ENCODE measurements at regions of chr11 and their contacts with region 1.

Region 1: DNA sequence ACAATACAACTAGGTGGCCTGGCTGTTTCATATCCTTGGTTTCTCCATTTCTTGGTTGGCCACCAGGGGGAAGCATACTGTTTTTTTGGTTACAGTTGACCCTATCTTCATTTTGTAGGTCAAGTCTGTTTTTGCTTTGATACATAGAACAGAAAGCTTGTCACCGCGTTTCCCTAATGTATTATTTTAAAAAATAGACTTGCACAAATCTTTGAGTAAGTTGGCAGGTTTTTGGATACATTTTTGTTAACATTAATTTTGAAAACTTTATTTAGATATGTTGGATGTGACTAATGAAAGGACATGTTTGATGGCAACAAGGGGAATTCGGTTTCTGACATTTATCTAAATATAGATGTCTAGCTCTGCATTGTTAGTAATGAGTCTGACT is 3.0 kb downstream of the NCR3LG1 start:
- DNase-seq: peak; percentile 13 to 82 (median 62)
- ATAC-seq: no peak
- H3K4me3 ChIP-seq: no peak overlapping the region
- H3K4me3 Mint-ChIP-seq: peak overlapping the region; percentile 91
- H3K27ac ChIP-seq: no peak overlapping the region
- H3K27ac Mint-ChIP-seq: no peak overlapping the region
- H3K4me1 ChIP-seq: peaks cover 20% of the 10 kb centered on the region
- H3K4me1 Mint-ChIP-seq: peaks cover 30% of the 10 kb centered on the region
- H3K27me3 ChIP-seq: no peaks in the 10 kb centered on the region
- H3K27me3 Mint-ChIP-seq: no peaks in the 10 kb centered on the region
- CTCF ChIP-seq: peak; percentile 68

Region 2: GRCh38 chr11:16738193-16738946 is 616.2 kb before region 1 on chr11 and contains the start of gene C11orf58:
- CTCF ChIA-PET with region 1: no interaction called
- POLR2A ChIA-PET with region 1: no interaction called
- intact Hi-C with region 1: loop called in 1 of 2 experiments (anchors 10 kb)
- DNase-seq: peak; percentile 85 to 98 (median 96)
- ATAC-seq: peak; percentile 95
- H3K4me3 ChIP-seq: peak within 1 kb of the TSS; percentile 93 to 95
- H3K4me3 Mint-ChIP-seq: peak within 1 kb of the TSS; percentile 63
- H3K27ac ChIP-seq: peak within 1 kb of the TSS; percentile 99 to 100
- H3K27ac Mint-ChIP-seq: no peak within 1 kb of the TSS
- H3K4me1 ChIP-seq: peaks cover 35% of the 10 kb centered on the region
- H3K4me1 Mint-ChIP-seq: peaks cover 25% of the 10 kb centered on the region
- H3K27me3 ChIP-seq: no peaks in the 10 kb centered on the region
- H3K27me3 Mint-ChIP-seq: no peaks in the 10 kb centered on the region
- CTCF ChIP-seq: no peak
- total RNA-seq, gene C11orf58: 148 to 157 TPM

Region 3: GRCh38 chr11:16935518-16936302 is 418.9 kb before region 1 on chr11:
- CTCF ChIA-PET with region 1: no interaction called
- POLR2A ChIA-PET with region 1: no interaction called
- intact Hi-C with region 1: no loop called
- DNase-seq: peak in 2 of 9 experiments; percentile 42 to 49
- ATAC-seq: no peak
- H3K4me3 ChIP-seq: no peak overlapping the region
- H3K4me3 Mint-ChIP-seq: no peak overlapping the region
- H3K27ac ChIP-seq: no peak overlapping the region
- H3K27ac Mint-ChIP-seq: no peak overlapping the region
- H3K4me1 ChIP-seq: no peaks in the 10 kb centered on the region
- H3K4me1 Mint-ChIP-seq: no peaks in the 10 kb centered on the region
- H3K27me3 ChIP-seq: no peaks in the 10 kb centered on the region
- H3K27me3 Mint-ChIP-seq: peaks cover 6% of the 10 kb centered on the region
- CTCF ChIP-seq: no peak

Region 4: DNA sequence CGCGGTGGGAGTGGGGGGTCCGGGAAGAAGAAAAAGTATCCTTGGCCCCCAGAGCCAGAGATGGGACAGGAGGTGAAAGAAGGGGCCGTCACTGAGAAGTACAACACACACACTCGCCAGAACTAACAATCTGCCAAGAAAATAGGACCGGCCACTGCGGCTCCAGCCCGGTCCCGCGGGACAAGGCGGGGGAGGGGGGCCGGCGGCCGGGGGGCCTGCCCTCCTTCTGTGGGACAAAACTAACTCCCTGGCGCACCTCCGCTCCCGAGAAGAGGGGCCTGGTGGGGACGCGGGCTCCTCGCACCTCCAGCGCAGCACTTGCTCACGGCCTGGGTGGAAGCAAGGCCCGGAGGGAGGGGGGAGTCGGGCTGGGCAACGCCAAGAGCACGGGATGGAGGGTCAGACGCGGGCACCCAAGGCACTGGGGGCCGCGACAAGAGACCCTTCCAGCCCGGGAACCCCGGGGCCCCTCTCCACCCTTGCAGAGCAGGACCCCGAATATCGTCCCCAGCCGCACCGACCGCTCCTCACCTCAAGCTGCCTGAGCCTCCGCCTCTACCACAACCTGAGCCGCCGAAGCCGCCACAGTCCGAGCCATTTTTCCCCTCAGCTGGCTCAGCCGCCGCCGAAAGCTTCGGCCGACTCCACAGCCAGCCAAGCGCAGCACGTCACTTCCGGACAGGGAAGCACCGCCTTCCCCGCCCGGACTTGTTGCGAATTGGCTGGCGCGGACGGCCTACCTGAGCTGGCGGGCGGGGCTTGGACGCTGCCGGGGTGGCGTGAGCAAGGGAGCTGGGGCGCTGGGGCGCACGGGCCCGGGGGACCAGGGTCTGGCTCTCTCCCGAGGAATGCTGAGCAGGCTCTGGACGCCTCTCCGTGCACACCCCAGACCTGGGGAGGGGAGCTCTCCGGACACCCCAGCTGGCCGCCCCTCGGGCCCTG is 147.0 kb before region 1 on chr11 and contains the start of gene PIK3C2A:
- CTCF ChIA-PET with region 1: no interaction called
- POLR2A ChIA-PET with region 1: interaction called, 3 read pairs
- intact Hi-C with region 1: loop called (anchors 1 to 5 kb)
- DNase-seq: peak; percentile 87 to 96 (median 94)
- ATAC-seq: peak; percentile 96
- H3K4me3 ChIP-seq: peak within 1 kb of the TSS; percentile 80 to 86
- H3K4me3 Mint-ChIP-seq: peak within 1 kb of the TSS; percentile 99
- H3K27ac ChIP-seq: peak within 1 kb of the TSS; percentile 76 to 88
- H3K27ac Mint-ChIP-seq: peak within 1 kb of the TSS; percentile 99
- H3K4me1 ChIP-seq: peaks cover 26% of the 10 kb centered on the region
- H3K4me1 Mint-ChIP-seq: peaks cover 47% of the 10 kb centered on the region
- H3K27me3 ChIP-seq: no peaks in the 10 kb centered on the region
- H3K27me3 Mint-ChIP-seq: no peaks in the 10 kb centered on the region
- CTCF ChIP-seq: no peak
- total RNA-seq, gene PIK3C2A: 50.8 to 54.3 TPM

Region 5: DNA sequence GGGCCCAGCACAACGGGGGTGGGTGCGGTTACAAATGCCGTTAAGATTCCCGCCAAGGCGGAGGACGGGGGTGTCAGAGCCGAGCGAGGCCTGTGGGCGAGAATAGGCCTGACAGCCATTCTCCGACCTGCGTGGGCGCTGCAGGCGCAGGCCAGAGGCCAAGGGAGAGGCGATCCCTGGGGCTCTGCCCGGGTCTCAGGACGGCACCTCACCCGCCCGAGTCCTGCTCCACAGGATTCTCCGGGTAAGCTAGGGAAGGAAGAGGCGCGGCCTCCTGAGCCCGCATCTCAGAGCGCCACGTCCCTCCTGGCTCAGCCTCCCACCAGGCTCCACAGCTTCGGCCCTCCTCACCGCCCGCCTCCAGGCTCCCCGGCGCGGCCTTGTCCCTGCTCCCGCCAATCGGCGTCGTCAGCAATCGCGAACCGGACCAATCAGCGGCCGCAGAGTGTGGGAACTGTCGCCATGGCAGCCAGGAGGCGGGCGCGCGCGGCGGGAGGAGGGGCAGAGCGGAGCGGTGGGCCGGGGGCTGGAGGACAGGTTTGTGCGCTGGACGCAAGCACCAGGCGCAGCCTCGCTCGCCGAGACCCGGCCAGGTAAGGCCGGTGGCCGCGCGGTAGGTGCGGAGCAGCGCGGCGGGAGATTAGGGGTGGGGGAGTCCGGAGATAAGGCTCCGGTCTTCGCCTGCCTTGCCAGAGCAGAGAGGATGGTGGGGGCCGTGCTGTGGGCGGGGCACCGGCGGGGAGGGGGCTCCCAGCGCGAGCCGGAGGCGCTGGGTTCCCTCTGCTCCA is 78.2 kb before region 1 on chr11 and contains the start of gene NUCB2:
- CTCF ChIA-PET with region 1: interaction called, 8 read pairs
- POLR2A ChIA-PET with region 1: interaction called, 19 read pairs
- intact Hi-C with region 1: loop called (anchors 2 kb)
- DNase-seq: peak; percentile 89 to 98 (median 96)
- ATAC-seq: peak; percentile 90
- H3K4me3 ChIP-seq: peak within 1 kb of the TSS; percentile 77 to 83
- H3K4me3 Mint-ChIP-seq: peak within 1 kb of the TSS; percentile 84
- H3K27ac ChIP-seq: peak within 1 kb of the TSS; percentile 79 to 86
- H3K27ac Mint-ChIP-seq: peak within 1 kb of the TSS; percentile 91
- H3K4me1 ChIP-seq: peaks cover 37% of the 10 kb centered on the region
- H3K4me1 Mint-ChIP-seq: peaks cover 39% of the 10 kb centered on the region
- H3K27me3 ChIP-seq: no peaks in the 10 kb centered on the region
- H3K27me3 Mint-ChIP-seq: no peaks in the 10 kb centered on the region
- CTCF ChIP-seq: no peak
- total RNA-seq, gene NUCB2: 105 TPM

Region 6: DNA sequence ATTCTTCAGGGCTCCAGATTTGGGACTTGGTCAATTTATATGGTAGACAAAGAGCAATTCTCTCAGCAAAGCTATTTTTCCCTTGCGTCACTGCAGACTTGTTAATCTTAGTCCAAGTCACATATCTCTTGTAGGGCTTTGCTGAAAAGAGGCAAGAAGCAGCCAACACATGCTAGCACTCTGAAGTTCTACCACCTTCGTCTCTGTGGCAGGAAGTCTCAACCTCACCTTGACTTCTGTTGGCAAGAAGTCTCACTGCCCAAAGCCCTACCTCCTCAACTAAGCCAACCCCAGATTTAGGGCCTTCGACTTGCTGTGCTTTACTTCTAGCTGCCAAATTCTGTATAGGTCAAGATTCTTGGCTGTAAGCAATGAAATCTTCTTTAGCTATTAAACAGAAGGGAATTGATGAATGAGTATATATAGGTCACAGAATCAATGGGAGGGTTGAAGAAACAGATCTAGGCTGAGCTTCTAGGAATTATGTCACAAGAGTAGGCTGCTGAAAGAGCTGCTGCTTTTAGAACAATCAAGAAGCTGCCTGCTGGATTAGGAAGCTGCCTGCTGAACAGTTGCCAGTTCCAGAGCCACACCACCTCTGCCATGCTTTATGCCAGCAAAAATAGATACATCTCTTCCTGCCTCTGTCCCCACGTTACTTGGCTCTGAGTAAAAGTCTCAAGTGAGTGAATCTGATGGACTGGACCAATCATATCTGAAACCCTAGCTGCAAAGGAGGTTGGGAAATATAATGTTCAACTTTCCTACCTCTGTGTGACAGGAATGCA is 20.6 kb before region 1 on chr11:
- CTCF ChIA-PET with region 1: interaction called, 6 read pairs
- POLR2A ChIA-PET with region 1: no interaction called
- intact Hi-C with region 1: loop called (anchors 2 kb)
- DNase-seq: peak in 5 of 9 experiments; percentile 35 to 64 (median 56)
- ATAC-seq: peak; percentile 95
- H3K4me3 ChIP-seq: no peak overlapping the region
- H3K4me3 Mint-ChIP-seq: no peak overlapping the region
- H3K27ac ChIP-seq: peak overlapping the region in 1 of 2 experiments; percentile 28
- H3K27ac Mint-ChIP-seq: peak overlapping the region; percentile 88
- H3K4me1 ChIP-seq: peaks cover 18% of the 10 kb centered on the region
- H3K4me1 Mint-ChIP-seq: peaks cover 19% of the 10 kb centered on the region
- H3K27me3 ChIP-seq: no peaks in the 10 kb centered on the region
- H3K27me3 Mint-ChIP-seq: no peaks in the 10 kb centered on the region
- CTCF ChIP-seq: no peak

Region 7: DNA sequence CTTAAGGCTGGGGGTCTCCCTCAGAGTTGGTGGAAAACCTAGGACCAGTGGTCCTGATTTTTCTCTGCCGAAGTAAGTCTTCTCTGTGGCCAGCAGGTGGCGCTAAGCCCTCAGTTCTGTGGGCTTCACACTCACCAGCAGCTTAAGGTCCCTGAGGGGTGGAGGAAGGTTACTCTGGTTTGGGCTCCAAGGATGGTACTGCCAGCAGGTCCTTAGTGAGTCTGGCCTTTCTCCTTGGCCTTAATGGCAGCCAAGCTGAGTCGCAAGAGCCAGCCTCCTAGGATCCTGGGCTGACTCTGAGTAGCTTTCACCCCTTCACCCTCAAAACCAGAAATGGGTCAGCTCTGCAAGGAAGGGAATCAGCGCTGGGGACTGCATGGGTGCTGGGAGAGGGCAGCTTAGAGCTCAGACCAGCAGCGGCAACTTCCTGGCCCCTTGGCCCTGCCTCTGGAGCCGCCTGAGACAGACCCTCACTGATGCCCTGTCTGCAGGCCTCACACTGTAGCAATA is 29.5 kb after region 1 on chr11:
- CTCF ChIA-PET with region 1: interaction called, 10 read pairs
- POLR2A ChIA-PET with region 1: interaction called, 5 read pairs
- intact Hi-C with region 1: loop called (anchors 2 kb)
- DNase-seq: peak; percentile 51 to 87 (median 79)
- ATAC-seq: peak; percentile 68
- H3K4me3 ChIP-seq: no peak overlapping the region
- H3K4me3 Mint-ChIP-seq: no peak overlapping the region
- H3K27ac ChIP-seq: no peak overlapping the region
- H3K27ac Mint-ChIP-seq: no peak overlapping the region
- H3K4me1 ChIP-seq: no peaks in the 10 kb centered on the region
- H3K4me1 Mint-ChIP-seq: no peaks in the 10 kb centered on the region
- H3K27me3 ChIP-seq: peaks cover 0 to 2% of the 10 kb centered on the region in 2 experiments
- H3K27me3 Mint-ChIP-seq: no peaks in the 10 kb centered on the region
- CTCF ChIP-seq: peak; percentile 86

Region 8: GRCh38 chr11:17423533-17424310 is 69.1 kb after region 1 on chr11:
- CTCF ChIA-PET with region 1: no interaction called
- POLR2A ChIA-PET with region 1: no interaction called
- intact Hi-C with region 1: no loop called
- DNase-seq: no peak
- ATAC-seq: no peak
- H3K4me3 ChIP-seq: no peak overlapping the region
- H3K4me3 Mint-ChIP-seq: no peak overlapping the region
- H3K27ac ChIP-seq: no peak overlapping the region
- H3K27ac Mint-ChIP-seq: no peak overlapping the region
- H3K4me1 ChIP-seq: no peaks in the 10 kb centered on the region
- H3K4me1 Mint-ChIP-seq: no peaks in the 10 kb centered on the region
- H3K27me3 ChIP-seq: no peaks in the 10 kb centered on the region
- H3K27me3 Mint-ChIP-seq: peaks cover 23% of the 10 kb centered on the region
- CTCF ChIP-seq: no peak